ENCODE measurements at regions of chr12 and their contacts with region 1.

Region 1: DNA sequence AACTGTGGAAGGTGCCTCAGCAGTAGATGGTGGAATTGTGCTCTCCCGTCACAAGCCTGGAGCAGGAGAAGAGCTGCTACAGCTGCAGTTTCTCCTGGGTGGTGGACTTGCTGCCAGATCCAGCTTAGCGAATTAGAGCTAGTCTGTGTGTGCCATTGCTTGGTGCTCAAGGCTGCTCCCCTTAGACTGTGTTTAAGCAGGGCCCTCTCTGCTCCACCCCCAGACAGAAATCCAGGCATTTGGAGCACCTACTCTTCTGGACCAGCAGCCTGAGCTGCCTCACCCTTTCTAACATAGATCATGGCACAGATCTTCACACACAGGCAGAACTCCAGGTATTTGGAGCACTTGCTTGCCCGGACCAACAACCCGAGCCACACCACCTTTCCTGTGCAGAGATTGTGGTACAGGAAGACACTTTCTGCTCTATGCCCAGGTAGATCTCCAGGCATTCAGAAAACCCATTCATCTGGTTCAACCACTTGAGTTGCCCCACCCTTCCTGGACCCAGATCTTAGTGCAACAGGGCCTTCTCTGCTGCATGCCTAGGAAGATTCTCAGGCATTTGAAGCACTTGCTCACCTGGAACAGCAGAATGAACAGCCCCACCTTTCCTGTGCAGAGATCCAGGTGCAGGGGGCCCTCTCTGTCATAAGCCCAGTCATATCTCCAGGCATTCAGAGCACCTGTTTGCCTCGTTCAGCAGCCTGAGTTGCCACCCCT is 412.7 kb upstream of the MGAT4C start:
- DNase-seq: peak; percentile 76 to 77
- H3K4me3 ChIP-seq: no peak overlapping the region
- H3K27ac ChIP-seq: 0 out of 2 replicates have a peak overlapping the region, but pooled peaks have one; percentile 22
- H3K4me1 ChIP-seq: peaks cover 15% of the 10 kb centered on the region
- H3K27me3 ChIP-seq: no peaks in the 10 kb centered on the region
- CTCF ChIP-seq: no peak

Region 2: GRCh38 chr12:86683568-86684304 is 14.9 kb after region 1 on chr12:
- CTCF ChIA-PET with region 1: no interaction called
- POLR2A ChIA-PET with region 1: no interaction called
- intact Hi-C with region 1: no loop called
- DNase-seq: no peak
- H3K4me3 ChIP-seq: no peak overlapping the region
- H3K27ac ChIP-seq: no peak overlapping the region
- H3K4me1 ChIP-seq: no peaks in the 10 kb centered on the region
- H3K27me3 ChIP-seq: no peaks in the 10 kb centered on the region
- CTCF ChIP-seq: no peak

Region 3: GRCh38 chr12:86712425-86712843 is 43.6 kb after region 1 on chr12:
- CTCF ChIA-PET with region 1: no interaction called
- POLR2A ChIA-PET with region 1: no interaction called
- intact Hi-C with region 1: loop called (anchors 1 kb)
- DNase-seq: peak; percentile 12 to 97
- H3K4me3 ChIP-seq: peak overlapping the region; percentile 20; the same call in 1 of the 2 replicates
- H3K27ac ChIP-seq: peak overlapping the region; percentile 92
- H3K4me1 ChIP-seq: peaks cover 21% of the 10 kb centered on the region
- H3K27me3 ChIP-seq: no peaks in the 10 kb centered on the region
- CTCF ChIP-seq: no peak

Region 4: GRCh38 chr12:86727151-86727550 is 58.3 kb after region 1 on chr12:
- CTCF ChIA-PET with region 1: no interaction called
- POLR2A ChIA-PET with region 1: no interaction called
- intact Hi-C with region 1: no loop called
- DNase-seq: peak in 1 of 2 experiments; percentile 34
- H3K4me3 ChIP-seq: no peak overlapping the region
- H3K27ac ChIP-seq: no peak overlapping the region
- H3K4me1 ChIP-seq: no peaks in the 10 kb centered on the region
- H3K27me3 ChIP-seq: no peaks in the 10 kb centered on the region
- CTCF ChIP-seq: no peak

Region 5: GRCh38 chr12:86931714-86932113 is 262.9 kb after region 1 on chr12:
- CTCF ChIA-PET with region 1: no interaction called
- POLR2A ChIA-PET with region 1: interaction called, 15 read pairs
- intact Hi-C with region 1: no loop called
- DNase-seq: no peak
- H3K4me3 ChIP-seq: no peak overlapping the region
- H3K27ac ChIP-seq: no peak overlapping the region
- H3K4me1 ChIP-seq: no peaks in the 10 kb centered on the region
- H3K27me3 ChIP-seq: no peaks in the 10 kb centered on the region
- CTCF ChIP-seq: no peak

Measured in PC-9 (cell line).